ENCODE measurements at regions of chr12 and their contacts with region 1.

Region 1: GRCh38 chr12:14769969-14770495 is 33.2 kb downstream of the WBP11 start:
- DNase-seq: peak; percentile 87 to 94 (median 90)
- H3K4me3 ChIP-seq: peak overlapping the region; percentile 88 to 92
- H3K4me3 Mint-ChIP-seq: peak overlapping the region; percentile 94 to 99 (median 97)
- H3K27ac ChIP-seq: peak overlapping the region; percentile 98
- H3K27ac Mint-ChIP-seq: peak overlapping the region; percentile 97 to 100 (median 99)
- H3K4me1 ChIP-seq: peaks cover 50% of the 10 kb centered on the region
- H3K4me1 Mint-ChIP-seq: peaks cover 30 to 83% (median 50%) of the 10 kb centered on the region in 4 donors
- H3K27me3 ChIP-seq: no peaks in the 10 kb centered on the region
- H3K27me3 Mint-ChIP-seq: no peaks in the 10 kb centered on the region

Region 2: GRCh38 chr12:14384783-14385638 is 385.0 kb before region 1 on chr12:
- CTCF ChIA-PET with region 1: interaction called, 3 read pairs
- POLR2A ChIA-PET with region 1: interaction called, 34 read pairs
- intact Hi-C with region 1: loop called (anchors 5 kb)
- DNase-seq: peak; percentile 81 to 87 (median 86)
- H3K4me3 ChIP-seq: peak overlapping the region in 1 of 2 donors; percentile 41
- H3K4me3 Mint-ChIP-seq: peak overlapping the region; percentile 64 to 92 (median 78)
- H3K27ac ChIP-seq: peak overlapping the region; percentile 74
- H3K27ac Mint-ChIP-seq: peak overlapping the region; percentile 93 to 97 (median 94)
- H3K4me1 ChIP-seq: peaks cover 73% of the 10 kb centered on the region
- H3K4me1 Mint-ChIP-seq: peaks cover 42 to 67% (median 57%) of the 10 kb centered on the region in 4 donors
- H3K27me3 ChIP-seq: no peaks in the 10 kb centered on the region
- H3K27me3 Mint-ChIP-seq: no peaks in the 10 kb centered on the region

Region 3: DNA sequence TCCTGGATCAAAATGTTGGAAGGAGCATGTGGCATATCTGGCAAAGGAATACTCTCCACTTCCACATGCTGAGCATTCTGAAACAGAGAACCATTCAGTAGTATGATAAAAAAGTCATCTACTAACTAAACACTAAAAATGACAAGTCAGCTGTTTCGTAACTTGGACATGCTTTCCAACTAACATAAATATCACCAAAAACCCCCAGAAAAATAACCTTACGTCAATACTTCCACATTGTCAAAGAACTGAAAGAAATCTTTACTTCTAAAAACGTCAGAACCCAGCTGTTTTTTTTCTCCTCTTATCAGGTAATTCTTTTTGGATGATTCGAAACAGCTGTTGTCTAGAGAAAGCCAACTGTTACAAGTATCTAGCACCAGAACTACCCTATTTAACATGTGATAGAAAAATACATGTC is 25.0 kb after region 1 on chr12:
- CTCF ChIA-PET with region 1: interaction called, 27 read pairs
- POLR2A ChIA-PET with region 1: interaction called, 376 read pairs
- intact Hi-C with region 1: no loop called
- DNase-seq: no peak
- H3K4me3 ChIP-seq: no peak overlapping the region
- H3K4me3 Mint-ChIP-seq: no peak overlapping the region
- H3K27ac ChIP-seq: no peak overlapping the region
- H3K27ac Mint-ChIP-seq: no peak overlapping the region
- H3K4me1 ChIP-seq: no peaks in the 10 kb centered on the region
- H3K4me1 Mint-ChIP-seq: peaks cover 0 to 5% (median 2%) of the 10 kb centered on the region in 4 donors
- H3K27me3 ChIP-seq: no peaks in the 10 kb centered on the region
- H3K27me3 Mint-ChIP-seq: no peaks in the 10 kb centered on the region

Region 4: DNA sequence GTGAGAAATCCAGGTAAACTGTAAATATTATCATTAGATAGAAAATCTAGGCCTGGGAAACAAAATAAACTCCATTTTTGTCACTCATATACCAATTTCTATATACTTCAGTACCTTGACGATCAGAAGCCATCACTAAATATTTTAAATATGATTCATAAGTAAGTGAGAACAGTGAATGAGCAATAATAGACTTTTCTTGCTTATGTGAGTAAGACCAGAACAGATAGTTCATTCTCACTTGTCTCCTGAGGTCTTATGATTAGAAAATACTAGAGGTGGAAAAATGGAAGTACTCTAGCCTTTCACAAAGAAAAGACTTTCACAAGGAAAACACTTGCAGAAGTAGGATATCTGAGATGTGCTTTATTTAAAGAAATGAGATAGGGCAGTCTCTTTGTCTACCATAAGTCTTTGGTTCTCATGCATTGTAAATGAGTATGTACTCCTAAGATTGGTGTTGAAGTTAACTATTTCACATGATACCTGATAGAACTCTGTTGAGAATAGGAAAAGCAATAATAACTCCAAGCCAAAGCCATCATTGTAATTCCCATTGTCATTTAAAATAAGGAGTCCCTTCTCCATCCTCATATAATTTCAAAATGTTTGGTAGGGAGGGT is 54.1 kb after region 1 on chr12:
- CTCF ChIA-PET with region 1: no interaction called
- POLR2A ChIA-PET with region 1: no interaction called
- intact Hi-C with region 1: no loop called
- DNase-seq: no peak
- H3K4me3 ChIP-seq: no peak overlapping the region
- H3K4me3 Mint-ChIP-seq: no peak overlapping the region
- H3K27ac ChIP-seq: no peak overlapping the region
- H3K27ac Mint-ChIP-seq: no peak overlapping the region
- H3K4me1 ChIP-seq: no peaks in the 10 kb centered on the region
- H3K4me1 Mint-ChIP-seq: no peaks in the 10 kb centered on the region
- H3K27me3 ChIP-seq: no peaks in the 10 kb centered on the region
- H3K27me3 Mint-ChIP-seq: peaks cover 0 to 3% of the 10 kb centered on the region in 2 donors

Region 5: DNA sequence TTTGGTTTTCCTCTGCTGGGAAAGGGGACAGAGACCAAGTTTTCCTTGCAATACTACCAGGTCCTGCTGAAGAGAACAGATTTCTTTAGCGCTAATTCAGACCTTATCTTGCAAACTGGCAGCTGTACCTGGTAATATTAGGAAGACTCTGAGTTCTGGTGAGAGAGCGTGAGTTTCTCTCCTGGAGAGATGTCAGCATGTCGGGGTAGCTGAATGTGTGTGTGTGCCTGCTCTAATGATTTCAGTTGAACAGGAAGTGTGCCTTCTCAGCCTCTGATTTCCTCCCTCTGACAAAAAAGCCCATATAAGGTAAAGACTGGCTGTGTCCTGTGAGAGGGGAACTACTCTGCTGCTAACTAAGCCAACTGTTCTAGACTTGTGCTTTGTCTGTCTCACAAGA is 178.6 kb after region 1 on chr12:
- CTCF ChIA-PET with region 1: interaction called, 3 read pairs
- POLR2A ChIA-PET with region 1: interaction called, 43 read pairs
- intact Hi-C with region 1: loop called (anchors 1 kb)
- DNase-seq: peak; percentile 76 to 86 (median 83)
- H3K4me3 ChIP-seq: peak overlapping the region; percentile 20 to 52
- H3K4me3 Mint-ChIP-seq: peak overlapping the region; percentile 73 to 93 (median 84)
- H3K27ac ChIP-seq: peak overlapping the region; percentile 92
- H3K27ac Mint-ChIP-seq: peak overlapping the region; percentile 94 to 100 (median 97)
- H3K4me1 ChIP-seq: peaks cover 91% of the 10 kb centered on the region
- H3K4me1 Mint-ChIP-seq: peaks cover 63 to 92% (median 85%) of the 10 kb centered on the region in 4 donors
- H3K27me3 ChIP-seq: no peaks in the 10 kb centered on the region
- H3K27me3 Mint-ChIP-seq: no peaks in the 10 kb centered on the region

Region 6: DNA sequence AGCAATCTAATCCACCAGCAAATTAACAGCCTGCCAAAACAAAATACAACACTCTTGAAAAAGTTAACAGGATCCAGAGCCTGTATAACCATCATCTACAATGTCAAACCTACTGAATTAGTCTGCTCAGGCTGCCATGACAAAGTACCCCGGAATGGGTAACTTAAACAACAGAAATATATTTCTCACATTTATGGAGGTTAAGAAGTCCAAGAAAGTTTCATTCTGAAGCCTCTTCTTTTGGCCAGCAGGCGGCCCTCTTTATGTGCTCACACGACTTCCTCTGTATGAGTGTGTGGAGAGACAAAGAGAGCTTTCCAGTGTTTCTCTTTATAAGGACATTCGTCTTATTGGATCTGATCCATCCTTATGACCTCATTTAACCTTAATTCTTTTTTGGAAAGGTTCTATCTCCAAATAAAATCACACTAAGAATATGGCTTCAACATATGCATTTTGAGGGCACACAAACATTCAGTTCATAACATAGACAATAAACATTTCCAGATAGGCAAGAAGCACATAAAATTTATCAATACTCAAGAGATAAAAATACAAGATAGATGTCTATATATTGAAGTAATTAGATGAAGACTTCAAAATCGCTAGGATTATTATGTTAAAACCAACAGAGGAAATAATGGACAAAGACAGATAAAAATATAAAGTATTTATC is 457.1 kb after region 1 on chr12:
- CTCF ChIA-PET with region 1: no interaction called
- POLR2A ChIA-PET with region 1: no interaction called
- intact Hi-C with region 1: no loop called
- DNase-seq: peak in 2 of 5 donors; percentile 4 to 9
- H3K4me3 ChIP-seq: no peak overlapping the region
- H3K4me3 Mint-ChIP-seq: no peak overlapping the region
- H3K27ac ChIP-seq: no peak overlapping the region
- H3K27ac Mint-ChIP-seq: no peak overlapping the region
- H3K4me1 ChIP-seq: no peaks in the 10 kb centered on the region
- H3K4me1 Mint-ChIP-seq: peaks cover 0 to 6% (median under 1%) of the 10 kb centered on the region in 4 donors
- H3K27me3 ChIP-seq: peaks cover 4% of the 10 kb centered on the region
- H3K27me3 Mint-ChIP-seq: peaks cover 22 to 32% of the 10 kb centered on the region in 2 donors

Region 7: DNA sequence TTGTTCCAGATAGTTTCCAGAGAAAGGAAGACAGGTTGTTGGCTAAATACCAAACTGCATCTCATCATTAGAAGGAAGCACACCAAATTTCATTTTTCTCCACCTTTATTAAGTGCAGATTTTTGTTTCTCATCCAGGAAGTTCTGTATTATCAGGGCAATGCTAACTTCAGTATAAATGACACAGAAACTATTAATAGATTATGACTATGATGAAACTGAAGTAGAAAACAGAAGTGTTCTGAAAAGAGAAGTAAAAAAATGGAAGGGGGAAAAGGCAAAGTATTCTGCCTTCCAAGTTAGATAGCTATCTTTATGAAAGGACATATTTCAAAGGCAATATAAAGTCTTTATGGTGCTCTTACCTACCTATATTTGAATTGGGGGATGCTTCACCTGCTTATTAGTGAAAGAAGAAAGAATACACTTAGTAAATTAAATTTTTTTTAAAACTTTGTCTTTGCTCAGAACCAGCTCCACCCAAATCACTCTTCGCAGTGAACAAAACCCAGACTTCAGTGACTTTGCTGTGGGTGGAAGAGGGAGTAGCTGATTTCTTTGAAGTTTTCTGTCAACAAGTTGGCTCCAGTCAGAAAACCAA is 776.2 kb after region 1 on chr12:
- CTCF ChIA-PET with region 1: no interaction called
- POLR2A ChIA-PET with region 1: interaction called, 4 read pairs
- intact Hi-C with region 1: loop called (anchors 5 kb)
- DNase-seq: peak; percentile 65 to 74 (median 68)
- H3K4me3 ChIP-seq: no peak overlapping the region
- H3K4me3 Mint-ChIP-seq: peak overlapping the region; percentile 22 to 80 (median 59)
- H3K27ac ChIP-seq: peak overlapping the region; percentile 30
- H3K27ac Mint-ChIP-seq: peak overlapping the region; percentile 85 to 98 (median 88)
- H3K4me1 ChIP-seq: peaks cover 50% of the 10 kb centered on the region
- H3K4me1 Mint-ChIP-seq: peaks cover 35 to 62% (median 42%) of the 10 kb centered on the region in 4 donors
- H3K27me3 ChIP-seq: no peaks in the 10 kb centered on the region
- H3K27me3 Mint-ChIP-seq: no peaks in the 10 kb centered on the region